Activated CD8-positive, alpha-beta T cell treated with anti-CD3 and anti-CD28 coated beads for 36 hours (primary cell): ENCODE measurements at regions of chr19 and their contacts with region 1.

Region 1: DNA sequence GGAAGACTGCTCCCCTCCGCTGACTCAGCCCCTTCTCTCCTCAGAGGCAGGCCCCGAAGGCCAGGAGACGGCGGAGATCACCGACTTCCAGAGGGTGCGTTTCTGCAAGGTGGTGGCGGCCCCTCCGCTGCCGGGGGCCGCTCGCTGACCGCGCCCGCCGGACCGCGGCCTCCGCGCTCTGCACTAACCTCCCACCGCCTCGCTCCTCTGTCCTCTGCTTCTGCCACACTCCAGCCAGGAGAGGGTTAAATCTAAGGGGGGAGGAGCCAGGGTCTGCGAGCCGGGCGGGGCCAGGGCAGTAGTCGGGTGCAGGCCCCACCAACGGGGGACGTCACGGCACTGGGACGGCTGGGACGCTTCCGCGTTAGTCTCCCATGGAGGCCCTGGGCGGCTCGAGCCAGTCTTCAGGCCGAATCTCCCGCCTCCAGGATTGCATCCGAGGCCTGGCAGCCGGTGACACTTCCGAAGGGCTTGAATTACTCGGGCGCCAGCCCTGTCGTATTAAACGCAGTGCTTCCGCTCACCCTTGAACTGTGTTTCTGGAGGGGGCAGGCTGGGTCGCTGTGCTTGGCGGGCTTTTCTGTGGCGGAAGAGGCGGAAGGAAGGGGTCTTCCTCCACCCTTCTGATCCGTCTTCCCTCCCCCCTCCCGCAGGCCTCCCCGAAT is 1.2 kb upstream of the INAFM1 start:
- DNase-seq: peak; percentile 93
- ATAC-seq: peak; percentile 69
- H3K4me3 Mint-ChIP-seq: peak overlapping the region; percentile 92
- H3K27ac Mint-ChIP-seq: peak overlapping the region; percentile 99
- H3K4me1 Mint-ChIP-seq: peaks cover 26% of the 10 kb centered on the region
- H3K27me3 Mint-ChIP-seq: no peaks in the 10 kb centered on the region
- CTCF ChIP-seq: no peak

Region 2: GRCh38 chr19:47232422-47233211 is 40.8 kb before region 1 on chr19:
- CTCF ChIA-PET with region 1: no interaction called
- POLR2A ChIA-PET with region 1: no interaction called
- intact Hi-C with region 1: no loop called
- DNase-seq: peak; percentile 63
- ATAC-seq: no peak
- H3K4me3 Mint-ChIP-seq: peak overlapping the region; percentile 65
- H3K27ac Mint-ChIP-seq: peak overlapping the region; percentile 80
- H3K4me1 Mint-ChIP-seq: peaks cover 16% of the 10 kb centered on the region
- H3K27me3 Mint-ChIP-seq: no peaks in the 10 kb centered on the region
- CTCF ChIP-seq: no peak

Region 3: GRCh38 chr19:47256688-47257443 is 16.6 kb before region 1 on chr19:
- CTCF ChIA-PET with region 1: no interaction called
- POLR2A ChIA-PET with region 1: interaction called, 33 read pairs
- intact Hi-C with region 1: loop called (anchors 2 kb)
- DNase-seq: peak; percentile 100
- ATAC-seq: peak; percentile 83
- H3K4me3 Mint-ChIP-seq: peak overlapping the region; percentile 84
- H3K27ac Mint-ChIP-seq: peak overlapping the region; percentile 98
- H3K4me1 Mint-ChIP-seq: peaks cover 36% of the 10 kb centered on the region
- H3K27me3 Mint-ChIP-seq: no peaks in the 10 kb centered on the region
- CTCF ChIP-seq: no peak

Region 4: GRCh38 chr19:47284324-47284899 is 11.0 kb after region 1 on chr19:
- CTCF ChIA-PET with region 1: interaction called, 22 read pairs
- POLR2A ChIA-PET with region 1: interaction called, 5 read pairs
- intact Hi-C with region 1: no loop called
- DNase-seq: peak; percentile 51
- ATAC-seq: peak; percentile 56
- H3K4me3 Mint-ChIP-seq: no peak overlapping the region
- H3K27ac Mint-ChIP-seq: no peak overlapping the region
- H3K4me1 Mint-ChIP-seq: peaks cover 6% of the 10 kb centered on the region
- H3K27me3 Mint-ChIP-seq: no peaks in the 10 kb centered on the region
- CTCF ChIP-seq: peak; percentile 87

Region 5: GRCh38 chr19:47296036-47296435 is 22.6 kb after region 1 on chr19:
- CTCF ChIA-PET with region 1: interaction called, 13 read pairs
- POLR2A ChIA-PET with region 1: interaction called, 3 read pairs
- intact Hi-C with region 1: no loop called
- DNase-seq: peak; percentile 89
- ATAC-seq: peak; percentile 97
- H3K4me3 Mint-ChIP-seq: no peak overlapping the region
- H3K27ac Mint-ChIP-seq: no peak overlapping the region
- H3K4me1 Mint-ChIP-seq: peaks cover 4% of the 10 kb centered on the region
- H3K27me3 Mint-ChIP-seq: no peaks in the 10 kb centered on the region
- CTCF ChIP-seq: peak; percentile 78

Region 6: DNA sequence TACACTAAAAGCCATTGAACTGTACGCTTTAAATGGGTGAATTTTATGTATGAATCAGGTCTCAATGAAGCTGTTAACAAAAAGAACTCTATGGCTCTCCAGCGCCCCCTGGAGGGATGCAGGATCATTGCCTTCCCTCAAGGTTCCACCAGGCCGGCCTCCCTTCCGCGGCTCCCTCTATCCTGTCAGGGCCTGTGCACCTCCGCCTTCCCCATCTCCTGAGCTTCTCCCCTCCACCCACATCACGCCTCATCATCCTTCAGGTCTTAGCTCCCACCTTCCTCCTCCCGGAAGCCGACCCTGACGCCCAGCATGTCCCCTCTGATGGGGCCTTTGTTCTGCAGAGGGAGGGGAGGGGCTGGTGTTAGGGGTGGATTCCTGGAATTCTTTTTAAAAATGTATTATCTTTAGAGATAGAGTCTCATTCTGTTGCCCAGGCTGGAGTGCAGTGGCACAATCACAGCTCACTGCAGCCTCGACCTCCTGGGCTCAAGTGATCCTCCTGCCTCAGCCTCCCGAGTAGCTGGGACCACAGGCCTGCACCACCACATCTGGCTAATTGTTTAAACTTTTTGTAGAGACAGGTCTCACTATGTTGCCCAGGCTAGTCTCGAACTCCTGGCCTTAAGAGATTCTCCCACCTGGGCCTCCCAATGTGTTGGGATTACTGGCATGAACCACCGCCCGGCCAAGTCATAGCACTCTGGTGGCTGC is 118.2 kb after region 1 on chr19:
- CTCF ChIA-PET with region 1: interaction called, 10 read pairs
- POLR2A ChIA-PET with region 1: no interaction called
- intact Hi-C with region 1: no loop called
- DNase-seq: peak; percentile 88
- ATAC-seq: peak; percentile 93
- H3K4me3 Mint-ChIP-seq: no peak overlapping the region
- H3K27ac Mint-ChIP-seq: no peak overlapping the region
- H3K4me1 Mint-ChIP-seq: peaks cover 4% of the 10 kb centered on the region
- H3K27me3 Mint-ChIP-seq: peaks cover 7% of the 10 kb centered on the region
- CTCF ChIP-seq: peak; percentile 94

Region 7: DNA sequence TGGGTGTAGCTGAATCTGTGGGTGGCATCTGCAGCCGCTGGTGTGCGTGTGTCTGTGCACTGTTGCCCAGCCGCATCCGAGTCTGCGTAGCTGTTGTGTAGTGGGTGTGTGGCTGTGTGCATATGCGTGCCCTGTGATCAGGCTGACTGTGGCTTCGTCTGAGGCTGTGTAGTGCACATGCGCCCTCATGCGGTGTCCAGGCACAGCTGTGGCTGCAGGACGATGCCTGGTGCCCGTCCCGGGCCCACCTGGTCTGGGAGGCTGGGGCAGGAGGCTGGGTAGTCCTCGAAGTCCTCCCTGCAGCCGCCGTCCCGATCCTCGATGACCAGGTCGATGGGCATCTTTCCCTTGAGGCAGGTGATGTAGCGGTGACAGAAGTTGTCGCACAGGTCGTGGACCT is 141.0 kb after region 1 on chr19:
- CTCF ChIA-PET with region 1: no interaction called
- POLR2A ChIA-PET with region 1: no interaction called
- intact Hi-C with region 1: no loop called
- DNase-seq: no peak
- ATAC-seq: no peak
- H3K4me3 Mint-ChIP-seq: no peak overlapping the region
- H3K27ac Mint-ChIP-seq: no peak overlapping the region
- H3K4me1 Mint-ChIP-seq: peaks cover 8% of the 10 kb centered on the region
- H3K27me3 Mint-ChIP-seq: peaks cover 40% of the 10 kb centered on the region
- CTCF ChIP-seq: no peak